Right ventricle myocardium inferior (tissue), 1 donor: ENCODE measurements at regions of chr19 and their contacts with region 1.

Region 1: GRCh38 chr19:18985257-18985656 is 44.2 kb upstream of the HOMER3 start:
- DNase-seq: peak; percentile 45
- ATAC-seq: no peak

Region 2: DNA sequence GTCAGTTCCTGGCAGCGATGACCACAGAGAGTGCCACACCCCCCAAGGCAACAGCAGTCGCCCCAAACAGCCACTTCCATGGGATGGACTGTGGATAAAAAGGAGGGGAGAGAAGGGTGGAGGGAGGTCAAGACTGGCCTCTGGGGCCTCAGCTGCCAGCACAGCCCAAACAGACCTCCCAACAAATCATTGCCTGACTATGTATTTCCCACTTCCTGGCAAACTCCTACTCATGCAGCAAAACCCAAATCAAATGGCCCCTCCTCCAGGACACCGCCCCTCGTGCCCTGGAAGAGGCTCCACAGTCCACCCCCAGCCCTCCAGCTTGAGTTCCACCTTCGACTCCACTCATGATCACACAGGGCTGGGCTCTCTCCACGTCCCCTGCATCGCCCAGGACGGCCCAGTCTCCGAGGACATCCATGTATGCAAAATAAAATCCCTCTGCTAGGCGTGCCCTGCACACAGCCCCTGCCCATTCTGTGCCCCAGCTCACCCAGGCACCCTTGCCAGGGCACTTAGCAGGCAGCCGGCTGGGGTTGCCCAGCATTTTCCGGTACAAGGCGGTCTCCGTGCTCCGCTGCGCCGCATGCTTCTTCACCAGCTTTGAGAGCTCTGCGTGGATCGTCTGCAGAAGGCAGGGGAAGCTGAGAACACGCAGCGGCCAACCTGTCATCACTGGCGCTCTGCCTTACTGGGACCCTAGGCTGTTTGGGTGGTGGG is 452.9 kb before region 1 on chr19:
- intact Hi-C with region 1: no loop called
- DNase-seq: no peak
- ATAC-seq: no peak

Region 3: DNA sequence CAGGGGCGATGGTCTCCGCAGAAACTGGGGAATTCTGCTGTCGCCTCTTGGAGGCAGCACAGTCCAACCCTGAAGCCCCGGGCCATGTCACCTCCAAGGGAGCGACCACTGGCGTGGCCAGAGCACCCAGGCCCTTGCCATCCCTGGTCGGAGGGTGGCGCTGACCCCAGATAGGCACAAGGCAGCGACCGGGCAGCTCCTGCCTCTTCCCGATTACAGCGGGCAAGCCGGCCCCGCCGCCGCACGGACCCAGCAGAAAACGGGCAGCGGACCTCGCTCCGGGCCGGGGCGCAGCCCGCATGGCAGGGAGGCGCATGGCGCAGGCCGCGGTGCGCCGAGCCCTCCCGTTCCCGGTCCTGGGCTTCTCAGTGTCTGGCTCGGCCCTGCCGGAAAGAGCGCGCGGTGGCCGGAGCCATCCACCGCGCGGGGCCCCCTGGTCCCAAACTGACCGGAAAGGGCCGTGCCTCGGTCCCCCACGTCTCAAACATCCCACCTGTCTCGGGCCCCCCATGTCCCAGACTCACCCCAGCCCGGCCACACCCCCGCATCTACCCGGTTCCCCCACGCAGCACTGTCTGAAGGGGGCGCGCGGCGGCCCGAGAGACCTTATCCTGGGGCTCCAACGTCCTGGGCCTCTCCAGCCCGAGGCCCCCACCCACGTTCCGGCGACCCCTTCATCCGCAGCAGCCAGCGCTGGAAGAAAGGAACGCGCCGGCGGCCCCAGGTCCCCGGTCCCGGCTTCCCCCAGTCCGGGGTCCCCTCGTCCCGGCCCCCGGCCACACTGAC is 90.0 kb before region 1 on chr19:
- intact Hi-C with region 1: loop called (anchors 10 kb)
- DNase-seq: no peak
- ATAC-seq: no peak